ENCODE measurements at regions of chr5 and their contacts with region 1.

Region 1: GRCh38 chr5:141825791-141826560 is 52.2 kb downstream of the PCDH1 start:
- DNase-seq: no peak
- H3K4me3 ChIP-seq: peak overlapping the region in 30 of 59 donors; percentile 8 to 56 (median 36)
- H3K27ac ChIP-seq: peak overlapping the region in 58 of 59 donors; percentile 15 to 98 (median 91)
- H3K27me3 ChIP-seq: no peaks in the 10 kb centered on the region
- CTCF ChIP-seq: peak in 54 of 56 donors; percentile 26 to 71 (median 54)

Region 2: GRCh38 chr5:141747152-141748141 is 78.5 kb before region 1 on chr5:
- intact Hi-C with region 1: loop called in 1 of 2 experiments (anchors 5 kb)
- DNase-seq: peak; percentile 94 to 98 (median 96)
- H3K4me3 ChIP-seq: peak overlapping the region in 28 of 59 donors; percentile 1 to 47 (median 25)
- H3K27ac ChIP-seq: peak overlapping the region; percentile 2 to 94 (median 83)
- H3K27me3 ChIP-seq: no peaks in the 10 kb centered on the region
- CTCF ChIP-seq: peak in 9 of 56 donors; percentile 11 to 42 (median 22)

Region 3: GRCh38 chr5:141843162-141843927 is 17.4 kb after region 1 on chr5:
- intact Hi-C with region 1: loop called in 1 of 2 experiments (anchors 2 kb)
- DNase-seq: peak in 1 of 10 donors; percentile 36
- H3K4me3 ChIP-seq: no peak overlapping the region
- H3K27ac ChIP-seq: peak overlapping the region in 54 of 59 donors; percentile 6 to 100 (median 71)
- H3K27me3 ChIP-seq: no peaks in the 10 kb centered on the region
- CTCF ChIP-seq: no peak

Region 4: GRCh38 chr5:141866149-141867120 is 40.5 kb after region 1 on chr5:
- intact Hi-C with region 1: no loop called
- DNase-seq: peak; percentile 81 to 93 (median 92)
- H3K4me3 ChIP-seq: peak overlapping the region in 19 of 59 donors; percentile 0 to 35 (median 14)
- H3K27ac ChIP-seq: peak overlapping the region; percentile 5 to 91 (median 84)
- H3K27me3 ChIP-seq: no peaks in the 10 kb centered on the region
- CTCF ChIP-seq: peak in 19 of 56 donors; percentile 6 to 44 (median 22)

Measured in dorsolateral prefrontal cortex (tissue), 120 donors.